HEK293 (cell line): ENCODE measurements at regions of chr10 and their contacts with region 1.

Region 1: DNA sequence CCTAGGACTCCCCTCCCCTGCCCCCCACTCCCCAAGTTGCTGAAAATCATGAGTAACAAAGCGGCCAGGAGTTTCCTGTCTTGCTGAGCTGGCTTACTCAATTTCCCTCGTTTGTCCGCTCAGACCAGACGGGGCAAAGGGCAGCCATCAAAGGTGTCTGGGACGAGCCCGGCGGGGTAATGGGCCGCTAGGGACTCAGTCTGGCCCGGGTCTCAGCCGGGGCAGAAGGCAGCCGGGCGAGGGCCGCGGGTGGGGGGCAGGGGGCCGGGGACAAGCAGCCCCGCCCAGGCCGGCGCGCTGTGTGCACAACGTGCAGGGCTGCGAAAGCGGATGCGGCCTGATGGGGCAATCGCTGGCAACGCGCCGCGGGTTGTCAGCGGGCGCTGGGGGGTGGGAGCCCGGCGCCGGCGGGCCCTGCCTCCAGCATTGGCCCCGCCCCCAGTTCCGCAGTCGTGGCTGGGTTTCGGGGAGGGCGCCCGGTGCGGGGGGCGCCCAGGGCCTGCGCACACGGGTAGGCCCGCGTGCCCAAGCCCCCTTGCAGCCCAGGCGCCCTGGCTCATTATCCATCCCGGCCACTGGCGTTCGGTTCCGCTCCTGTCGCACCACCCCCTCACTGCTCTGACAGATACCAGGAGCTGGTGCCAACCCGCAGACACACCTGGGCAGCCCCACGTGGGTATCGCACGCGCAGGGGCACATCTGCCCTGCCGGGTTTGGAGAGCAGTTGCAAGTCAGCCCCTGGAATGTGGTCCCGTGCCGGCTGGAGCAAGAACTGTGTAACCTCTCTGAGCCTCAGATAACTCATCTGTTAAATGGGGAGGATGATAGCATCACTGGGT is 35.1 kb downstream of the DNAJB12 start:
- H3K4me3 ChIP-seq: no peak overlapping the region
- H3K27ac ChIP-seq: peak overlapping the region; percentile 77
- H3K4me1 ChIP-seq: peaks cover 23% of the 10 kb centered on the region
- CTCF ChIP-seq: peak; percentile 37; the same call in 1 of the 2 replicates

Region 2: DNA sequence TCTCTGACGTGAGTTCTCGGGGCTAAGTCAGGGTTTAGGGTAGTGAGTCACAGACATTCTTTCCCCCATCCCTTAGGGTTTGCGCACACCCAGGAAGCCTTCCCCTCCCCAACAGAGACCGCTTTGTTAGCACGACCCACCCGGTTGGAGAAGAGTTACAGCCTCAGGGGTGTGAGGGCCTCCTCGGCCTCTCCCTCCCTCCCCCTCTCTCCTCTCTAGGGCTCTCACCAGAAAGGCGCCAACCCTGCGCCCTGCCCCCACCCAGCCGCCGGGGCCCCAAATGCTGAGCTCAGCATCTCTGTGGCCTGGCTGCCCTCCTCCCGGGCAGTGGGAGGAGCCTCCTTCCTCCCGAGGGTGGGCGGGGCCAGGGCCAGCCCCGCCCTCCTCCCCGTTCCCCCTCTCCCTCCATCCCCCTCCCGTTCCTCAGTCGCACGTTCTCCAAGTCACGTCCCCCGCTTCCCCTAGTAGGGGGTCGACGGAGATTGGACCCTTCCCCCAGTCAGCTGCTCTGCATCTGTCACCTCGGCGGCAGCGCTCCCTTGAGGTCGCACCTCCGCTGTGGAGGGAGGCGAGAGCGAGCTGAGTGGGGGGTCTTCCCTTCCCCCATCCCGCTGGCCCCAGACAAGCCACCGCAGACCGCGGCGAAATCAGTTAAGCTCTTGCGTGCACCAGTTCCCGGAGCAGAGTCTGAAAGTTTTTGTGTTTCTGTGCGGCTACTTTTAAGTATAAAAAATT is 58.9 kb before region 1 on chr10:
- CTCF ChIA-PET with region 1: no interaction called
- POLR2A ChIA-PET with region 1: interaction called, 31 read pairs
- H3K4me3 ChIP-seq: peak overlapping the region; percentile 56
- H3K27ac ChIP-seq: peak overlapping the region; percentile 97
- H3K4me1 ChIP-seq: peaks cover 24% of the 10 kb centered on the region
- CTCF ChIP-seq: peak; percentile 70

Region 3: DNA sequence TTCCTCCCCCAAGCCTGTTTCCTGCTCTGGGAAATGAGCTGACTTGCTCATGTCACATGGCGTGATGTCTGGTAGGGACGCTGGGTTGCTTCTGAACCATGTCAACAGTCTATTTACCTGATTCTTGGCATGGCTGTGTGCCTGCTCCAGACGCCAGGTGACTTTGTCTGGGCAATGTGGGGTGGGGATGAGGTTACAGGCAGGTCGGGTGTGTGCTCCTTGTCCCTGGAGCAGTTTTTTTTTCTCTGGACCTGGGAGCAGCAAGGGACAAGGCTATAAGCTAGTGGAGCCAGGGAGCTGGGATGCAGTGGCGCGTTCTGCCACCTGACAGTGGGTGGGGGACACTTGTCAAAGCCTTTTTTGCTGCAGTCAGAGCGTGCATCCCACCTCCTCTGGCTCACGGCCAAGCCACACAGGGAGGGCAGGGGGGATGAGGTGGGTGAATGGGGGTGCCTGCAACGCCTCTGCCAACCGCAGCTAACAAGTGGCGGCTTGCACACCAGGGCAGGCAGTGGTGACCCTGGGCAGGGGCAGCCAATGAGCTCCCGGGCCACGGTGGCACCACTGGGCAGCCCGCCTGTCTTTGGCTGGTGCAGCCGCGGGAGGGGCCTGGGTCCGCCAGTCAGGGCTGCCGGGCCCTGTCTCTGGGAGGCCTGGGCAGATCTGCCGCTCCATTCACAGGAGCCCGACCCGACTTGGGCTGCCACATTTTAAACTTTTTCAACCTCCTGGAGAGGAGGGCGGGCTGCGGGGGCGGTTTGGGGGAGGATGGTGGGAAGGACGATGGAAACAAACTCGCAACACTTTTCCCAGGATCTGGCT is 12.2 kb after region 1 on chr10:
- CTCF ChIA-PET with region 1: interaction called, 6 read pairs
- POLR2A ChIA-PET with region 1: interaction called, 13 read pairs
- H3K4me3 ChIP-seq: no peak overlapping the region
- H3K27ac ChIP-seq: peak overlapping the region; percentile 91
- H3K4me1 ChIP-seq: peaks cover 28% of the 10 kb centered on the region
- CTCF ChIP-seq: peak; percentile 88